HCT116 (cell line): ENCODE measurements at regions of chr18 and their contacts with region 1.

Region 1: DNA sequence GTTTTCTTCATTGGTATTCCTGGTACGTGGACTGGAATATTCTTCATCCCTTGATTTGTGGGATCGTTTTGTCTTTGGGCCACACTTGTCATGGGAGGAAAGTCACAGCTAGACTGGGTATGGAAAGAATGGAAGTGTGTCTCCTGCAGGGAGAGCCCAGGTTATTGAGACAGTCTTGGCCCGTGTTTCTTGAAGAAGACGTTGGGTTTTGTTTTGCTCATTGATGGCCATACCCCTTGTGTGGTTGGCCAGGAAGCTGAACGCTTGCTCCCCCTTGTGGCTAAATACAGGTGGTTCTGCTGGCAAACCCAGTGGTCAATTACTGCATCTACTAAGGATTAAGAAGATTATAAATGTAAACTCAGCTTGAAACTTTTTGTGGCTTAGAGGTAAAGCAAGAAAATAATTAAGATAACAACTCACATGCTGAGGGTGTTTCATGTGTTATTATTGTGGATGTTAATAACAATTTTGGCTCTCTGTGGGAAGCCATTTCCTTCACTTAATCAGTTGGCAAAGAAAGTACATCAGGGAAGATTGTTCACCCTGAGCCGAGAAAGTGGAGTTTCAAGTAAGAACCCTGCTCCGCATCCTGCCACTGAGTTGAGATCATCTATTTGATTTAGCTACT is 91.8 kb downstream of the NEDD4L start:
- DNase-seq: peak; percentile 67
- ATAC-seq: peak; percentile 97
- H3K4me3 ChIP-seq: no peak overlapping the region
- H3K27ac ChIP-seq: no peak overlapping the region
- H3K4me1 ChIP-seq: peaks cover 0 to 5% of the 10 kb centered on the region in 2 experiments; a peak in 2 of 4 replicates
- H3K27me3 ChIP-seq: no peaks in the 10 kb centered on the region
- CTCF ChIP-seq: peak; percentile 78 to 97 (median 91); a peak in 5 of 6 replicates
- POLR2A ChIP-seq: no peak
- RAD21 ChIP-seq: peak; percentile 75

Region 2: GRCh38 chr18:56748698-56749268 is 1387.0 kb before region 1 on chr18:
- CTCF ChIA-PET with region 1: no interaction called
- POLR2A ChIA-PET with region 1: no interaction called
- RAD21 ChIA-PET with region 1: no interaction called
- intact Hi-C with region 1: loop called (anchors 5 kb)
- DNase-seq: peak; percentile 12
- ATAC-seq: no peak
- H3K4me3 ChIP-seq: no peak overlapping the region
- H3K27ac ChIP-seq: no peak overlapping the region
- H3K4me1 ChIP-seq: no peaks in the 10 kb centered on the region
- H3K27me3 ChIP-seq: no peaks in the 10 kb centered on the region
- CTCF ChIP-seq: peak; percentile 33 to 53 (median 51); a peak in 5 of 6 replicates
- POLR2A ChIP-seq: no peak
- RAD21 ChIP-seq: peak; percentile 76

Region 3: GRCh38 chr18:58080451-58080850 is 55.4 kb before region 1 on chr18:
- CTCF ChIA-PET with region 1: no interaction called
- POLR2A ChIA-PET with region 1: no interaction called
- RAD21 ChIA-PET with region 1: no interaction called
- intact Hi-C with region 1: no loop called
- DNase-seq: no peak
- ATAC-seq: no peak
- H3K4me3 ChIP-seq: no peak overlapping the region
- H3K27ac ChIP-seq: no peak overlapping the region
- H3K4me1 ChIP-seq: no peaks in the 10 kb centered on the region
- H3K27me3 ChIP-seq: no peaks in the 10 kb centered on the region
- CTCF ChIP-seq: no peak
- POLR2A ChIP-seq: no peak
- RAD21 ChIP-seq: no peak

Region 4: DNA sequence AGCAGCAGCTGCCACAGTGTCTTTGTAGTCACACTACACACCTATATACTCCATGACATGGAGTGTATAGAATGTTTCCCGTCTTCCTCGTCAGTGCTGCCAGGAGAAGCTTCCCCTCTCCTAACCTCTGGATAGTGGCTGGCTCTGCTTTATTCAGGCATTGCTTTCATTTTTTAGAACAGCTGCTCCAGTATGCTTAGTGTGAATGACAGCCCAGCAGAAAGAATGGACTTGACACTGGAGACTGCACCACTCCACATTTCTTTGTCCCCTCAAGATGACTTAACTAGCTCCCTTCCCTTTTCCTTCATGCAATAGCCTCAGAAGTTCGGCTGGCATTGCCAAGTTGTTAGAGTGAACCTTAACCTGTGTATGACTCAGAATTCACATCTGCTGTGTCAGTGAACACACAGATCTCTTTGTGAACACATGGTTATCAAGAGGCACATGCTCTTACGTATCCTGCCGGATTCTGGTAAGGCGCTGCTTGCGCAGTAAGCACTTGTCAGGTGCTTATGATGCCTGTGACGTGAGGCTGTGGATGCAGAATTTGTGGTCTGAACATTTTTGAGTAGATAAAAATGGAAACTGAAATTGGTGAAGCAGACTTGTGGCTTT is 17.9 kb before region 1 on chr18:
- CTCF ChIA-PET with region 1: interaction called, 12 read pairs
- POLR2A ChIA-PET with region 1: no interaction called
- RAD21 ChIA-PET with region 1: no interaction called
- intact Hi-C with region 1: no loop called
- DNase-seq: peak; percentile 34
- ATAC-seq: peak; percentile 57
- H3K4me3 ChIP-seq: no peak overlapping the region
- H3K27ac ChIP-seq: no peak overlapping the region
- H3K4me1 ChIP-seq: peaks cover 12 to 16% of the 10 kb centered on the region in 2 experiments
- H3K27me3 ChIP-seq: no peaks in the 10 kb centered on the region
- CTCF ChIP-seq: no peak
- POLR2A ChIP-seq: no peak
- RAD21 ChIP-seq: no peak

Region 5: DNA sequence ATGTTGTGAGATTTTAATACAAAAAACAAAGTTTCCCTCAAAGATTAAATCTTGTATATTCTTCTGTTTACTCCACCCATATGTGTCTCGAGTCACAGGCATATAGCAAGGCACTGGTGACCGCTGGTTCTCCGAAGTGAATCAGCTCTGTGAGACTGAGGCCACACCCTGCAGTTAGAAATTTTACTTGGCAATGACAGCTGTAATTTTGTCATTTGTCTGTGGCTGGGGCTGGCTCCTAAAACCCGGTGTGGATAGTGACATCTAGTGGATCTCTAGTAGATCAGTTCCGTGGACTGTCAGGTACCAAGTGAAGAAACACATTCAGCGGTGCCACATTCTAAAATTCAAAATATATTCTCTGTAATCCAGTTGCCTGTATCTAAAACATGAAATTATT is 186.2 kb after region 1 on chr18:
- CTCF ChIA-PET with region 1: interaction called, 4 read pairs
- POLR2A ChIA-PET with region 1: no interaction called
- RAD21 ChIA-PET with region 1: no interaction called
- intact Hi-C with region 1: loop called (anchors 5 kb)
- DNase-seq: peak; percentile 74
- ATAC-seq: peak; percentile 97
- H3K4me3 ChIP-seq: no peak overlapping the region
- H3K27ac ChIP-seq: no peak overlapping the region
- H3K4me1 ChIP-seq: peaks cover 13 to 30% of the 10 kb centered on the region in 2 experiments
- H3K27me3 ChIP-seq: no peaks in the 10 kb centered on the region
- CTCF ChIP-seq: peak; percentile 56 to 73 (median 62)
- POLR2A ChIP-seq: no peak
- RAD21 ChIP-seq: peak; percentile 94